H1 (cell line): ENCODE measurements at regions of chrX and their contacts with region 1.

Region 1: GRCh38 chrX:10597871-10598270 is 22.5 kb downstream of the MID1 start:
- DNase-seq: no peak
- H3K4me3 ChIP-seq: no peak overlapping the region
- H3K27ac ChIP-seq: no peak overlapping the region
- H3K4me1 ChIP-seq: peaks cover 0 to 4% (median 2%) of the 10 kb centered on the region in 4 experiments; a peak in 2 of 7 replicates
- H3K27me3 ChIP-seq: no peaks in the 10 kb centered on the region
- CTCF ChIP-seq: peak in 2 of 3 experiments; percentile 51 to 67; a peak in 3 of 4 replicates
- EP300 ChIP-seq: no peak
- POLR2A ChIP-seq: no peak
- RAD21 ChIP-seq: peak; percentile 64 to 71

Region 2: GRCh38 chrX:10620121-10620699 is 22.3 kb after region 1 on chrX and contains the start of gene MID1:
- CTCF ChIA-PET with region 1: interaction called, 10 read pairs
- POLR2A ChIA-PET with region 1: interaction called, 3 read pairs
- DNase-seq: peak in 1 of 2 experiments; percentile 60
- H3K4me3 ChIP-seq: peak within 1 kb of the TSS; percentile 68 to 93 (median 78)
- H3K27ac ChIP-seq: peak within 1 kb of the TSS; percentile 86
- H3K4me1 ChIP-seq: peaks cover 3 to 20% (median 4%) of the 10 kb centered on the region in 4 experiments
- H3K27me3 ChIP-seq: no peaks in the 10 kb centered on the region
- CTCF ChIP-seq: no peak
- EP300 ChIP-seq: no peak
- POLR2A ChIP-seq: peak; percentile 49 to 80
- RAD21 ChIP-seq: no peak
- total RNA-seq, gene MID1: 49.3 and 54.3 TPM in 2 replicates

Region 3: GRCh38 chrX:10749116-10749515 is 151.2 kb after region 1 on chrX:
- CTCF ChIA-PET with region 1: no interaction called
- POLR2A ChIA-PET with region 1: no interaction called
- DNase-seq: no peak
- H3K4me3 ChIP-seq: no peak overlapping the region
- H3K27ac ChIP-seq: no peak overlapping the region
- H3K4me1 ChIP-seq: peaks cover 0 to 1% (median 0%) of the 10 kb centered on the region in 4 experiments; a peak in 1 of 7 replicates
- H3K27me3 ChIP-seq: no peaks in the 10 kb centered on the region
- CTCF ChIP-seq: no peak
- EP300 ChIP-seq: no peak
- POLR2A ChIP-seq: no peak
- RAD21 ChIP-seq: no peak